Activated naive CD4-positive, alpha-beta T cell treated with anti-CD3 and anti-CD28 coated beads, Interleukin-2, amount 10 ng/mL, durations not matched to agents 7 days and 5 days (primary cell): ENCODE measurements at regions of chr12 and their contacts with region 1.

Region 1: DNA sequence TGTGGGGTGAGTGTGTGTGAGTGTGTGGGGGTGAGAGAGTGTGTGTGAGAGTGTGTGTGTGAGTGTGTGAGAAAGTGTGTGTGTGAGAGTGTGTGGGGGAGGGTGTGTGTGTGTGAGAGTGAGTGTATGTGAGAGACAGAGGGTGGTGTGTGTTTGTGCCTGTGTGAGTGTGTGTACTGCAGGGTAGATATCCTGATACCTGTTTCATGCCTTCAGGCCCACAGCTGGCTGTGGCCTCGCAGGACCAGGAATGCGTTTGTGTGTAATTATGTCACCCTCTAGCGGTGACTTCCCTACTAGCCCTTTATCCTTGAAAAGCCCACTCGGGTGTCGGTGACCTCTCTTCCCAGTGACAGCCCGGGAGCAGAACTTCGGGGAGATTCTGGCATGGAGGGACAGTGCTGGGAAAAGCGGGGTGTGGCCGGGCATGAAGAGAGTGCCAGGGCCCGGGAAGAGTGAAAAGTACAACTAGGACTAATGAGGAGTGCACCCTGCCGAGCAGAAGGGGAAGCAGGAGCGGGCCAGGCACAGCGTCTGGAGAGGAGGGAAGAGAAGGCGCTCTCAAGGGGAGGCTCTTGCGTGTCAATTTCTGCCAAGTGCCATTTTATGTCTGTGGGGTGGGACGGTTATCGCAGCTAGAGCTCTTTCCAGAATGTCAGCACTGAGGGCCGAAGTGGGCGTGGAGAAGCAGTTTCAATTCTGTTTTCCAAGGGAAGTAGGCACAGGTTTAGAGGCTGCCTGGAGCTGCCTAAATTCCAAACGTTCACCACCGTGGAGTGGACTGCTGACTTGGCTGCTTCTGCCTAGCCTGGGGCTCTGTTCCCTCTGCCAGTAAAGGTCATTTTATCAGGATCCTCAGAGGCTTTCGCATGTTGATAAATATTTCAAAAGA is 11.0 kb upstream of the FBXL14 start:
- DNase-seq: peak; percentile 69
- H3K4me3 Mint-ChIP-seq: peak overlapping the region; percentile 72
- H3K27ac Mint-ChIP-seq: no peak overlapping the region
- H3K4me1 Mint-ChIP-seq: peaks cover 37% of the 10 kb centered on the region
- H3K27me3 Mint-ChIP-seq: peaks cover 26% of the 10 kb centered on the region

Region 2: GRCh38 chr12:1594261-1595025 is 10.9 kb before region 1 on chr12 and contains the start of gene FBXL14:
- CTCF ChIA-PET with region 1: interaction called, 19 read pairs
- DNase-seq: peak; percentile 94
- H3K4me3 Mint-ChIP-seq: peak within 1 kb of the TSS; percentile 97
- H3K27ac Mint-ChIP-seq: peak within 1 kb of the TSS; percentile 94
- H3K4me1 Mint-ChIP-seq: peaks cover 50% of the 10 kb centered on the region
- H3K27me3 Mint-ChIP-seq: no peaks in the 10 kb centered on the region

Region 3: GRCh38 chr12:1804545-1805332 is 199.4 kb after region 1 on chr12:
- CTCF ChIA-PET with region 1: no interaction called
- DNase-seq: peak; percentile 93
- H3K4me3 Mint-ChIP-seq: no peak overlapping the region
- H3K27ac Mint-ChIP-seq: peak overlapping the region; percentile 75
- H3K4me1 Mint-ChIP-seq: peaks cover 7% of the 10 kb centered on the region
- H3K27me3 Mint-ChIP-seq: peaks cover 5% of the 10 kb centered on the region